ENCODE measurements at regions of chr10 and their contacts with region 1.

Region 1: DNA sequence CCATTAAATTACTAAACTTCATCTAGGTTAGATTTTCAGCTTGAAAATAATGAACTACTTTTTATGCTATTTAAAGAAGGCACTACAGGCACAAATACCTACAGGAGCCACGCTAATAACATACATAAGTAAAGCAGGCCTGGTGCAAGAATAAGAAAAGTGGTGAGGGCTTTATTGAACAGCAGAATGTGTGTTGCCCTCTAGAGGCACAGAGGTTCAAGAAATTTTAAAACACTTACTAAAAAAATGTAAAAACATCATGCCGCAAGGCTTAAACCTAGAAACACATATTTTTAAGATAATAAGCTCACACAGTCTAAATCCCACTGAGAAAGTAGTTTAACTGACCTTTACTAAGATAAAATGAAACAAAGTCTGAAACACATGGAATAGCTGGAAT is 20.3 kb downstream of the CACUL1 start:
- DNase-seq: no peak
- H3K4me3 ChIP-seq: no peak overlapping the region
- H3K27ac ChIP-seq: no peak overlapping the region
- H3K4me1 ChIP-seq: peaks cover 0 to 8% (median 0%) of the 10 kb centered on the region in 4 experiments; a peak in 3 of 7 replicates
- H3K27me3 ChIP-seq: no peaks in the 10 kb centered on the region
- CTCF ChIP-seq: peak in 1 of 3 experiments; percentile 4; a peak in 1 of 4 replicates
- EP300 ChIP-seq: no peak
- POLR2A ChIP-seq: no peak
- RAD21 ChIP-seq: no peak

Region 2: DNA sequence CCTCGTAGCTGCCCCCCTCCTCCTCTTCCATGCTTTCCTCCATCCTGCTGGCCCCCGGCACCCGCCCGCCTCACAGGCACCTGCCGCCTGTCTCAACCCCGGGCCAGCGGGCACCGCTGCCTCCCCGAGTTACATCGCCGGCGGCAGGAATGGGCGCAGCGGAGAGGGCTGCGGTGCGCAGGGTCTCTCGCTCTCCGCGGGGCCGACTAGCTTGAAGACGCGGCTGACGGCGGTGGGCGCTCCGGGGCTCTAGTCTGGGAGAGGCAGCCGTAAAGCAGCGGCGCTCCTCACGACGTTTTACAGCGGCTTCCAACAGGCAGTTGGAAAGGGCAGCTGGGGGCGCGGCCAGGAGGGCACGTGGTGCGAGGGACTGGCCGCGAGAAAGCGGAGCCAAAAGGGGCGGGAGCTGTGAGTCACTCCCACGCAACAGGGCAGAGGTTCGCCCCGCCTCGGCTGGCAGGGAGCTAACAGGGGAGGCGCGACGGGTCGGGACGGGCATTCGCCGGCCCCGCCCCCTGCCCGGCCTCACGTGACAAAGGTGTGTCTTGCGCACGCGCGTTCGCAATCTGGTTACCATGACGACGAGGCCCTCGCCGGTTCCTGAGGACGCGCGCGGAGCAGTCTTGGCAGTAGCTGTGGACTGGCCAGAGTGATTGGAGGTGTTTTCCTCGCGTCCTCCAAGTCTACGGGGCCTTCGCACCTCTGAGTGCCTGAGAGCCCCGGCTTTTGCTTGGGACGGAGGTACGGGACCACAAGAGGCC is 20.4 kb after region 1 on chr10 and contains the start of gene CACUL1:
- CTCF ChIA-PET with region 1: interaction called, 6 read pairs
- POLR2A ChIA-PET with region 1: interaction called, 13 read pairs
- DNase-seq: peak; percentile 99
- H3K4me3 ChIP-seq: peak within 1 kb of the TSS; percentile 84 to 97 (median 94)
- H3K27ac ChIP-seq: peak within 1 kb of the TSS; percentile 90
- H3K4me1 ChIP-seq: no peaks in the 10 kb centered on the region; a peak in 2 of 7 replicates
- H3K27me3 ChIP-seq: 0 out of 7 replicates have a peak, but pooled peaks cover 0 to under 1% (median 0%) of the 10 kb centered on the region in 4 experiments
- CTCF ChIP-seq: no peak
- EP300 ChIP-seq: no peak
- POLR2A ChIP-seq: peak; percentile 81 to 95
- RAD21 ChIP-seq: no peak
- total RNA-seq, gene CACUL1: 34.2 and 43.9 TPM in 2 replicates